PC-9 (cell line): ENCODE measurements at regions of chr20 and their contacts with region 1.

Region 1: DNA sequence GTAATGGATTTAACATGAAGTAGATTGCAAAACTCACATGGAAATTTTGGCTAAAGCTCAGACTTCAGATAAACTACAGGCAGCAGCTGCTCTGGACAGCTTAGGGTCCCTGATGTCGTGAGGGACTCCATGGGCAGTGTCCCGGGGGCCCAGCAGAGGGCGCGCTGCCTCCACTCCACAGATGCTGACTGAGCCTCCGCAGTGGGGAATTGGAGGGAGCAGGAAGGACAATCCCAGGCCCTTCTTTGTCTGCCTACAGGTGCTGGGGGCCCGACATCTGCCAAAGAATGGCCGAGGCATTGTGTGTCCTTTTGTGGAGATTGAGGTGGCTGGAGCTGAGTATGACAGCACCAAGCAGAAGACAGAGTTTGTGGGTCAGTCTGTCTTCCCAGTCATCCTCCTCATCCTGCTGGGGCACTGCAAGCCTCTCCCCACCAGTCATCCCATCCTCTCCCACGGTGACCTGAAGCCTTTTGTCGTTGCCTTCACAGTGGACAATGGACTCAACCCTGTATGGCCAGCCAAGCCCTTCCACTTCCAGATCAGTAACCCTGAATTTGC is 35.9 kb downstream of the PLCG1 start:
- DNase-seq: peak; percentile 45 to 74
- H3K4me3 ChIP-seq: no peak overlapping the region
- H3K27ac ChIP-seq: no peak overlapping the region
- H3K4me1 ChIP-seq: peaks cover 11% of the 10 kb centered on the region
- H3K27me3 ChIP-seq: no peaks in the 10 kb centered on the region
- CTCF ChIP-seq: peak; percentile 98

Region 2: GRCh38 chr20:41136680-41137613 is 36.3 kb before region 1 on chr20 and contains the start of gene PLCG1:
- CTCF ChIA-PET with region 1: interaction called, 11 read pairs
- POLR2A ChIA-PET with region 1: no interaction called
- intact Hi-C with region 1: no loop called
- DNase-seq: peak; percentile 62 to 92
- H3K4me3 ChIP-seq: peak within 1 kb of the TSS; percentile 94
- H3K27ac ChIP-seq: no peak within 1 kb of the TSS
- H3K4me1 ChIP-seq: peaks cover 15% of the 10 kb centered on the region
- H3K27me3 ChIP-seq: no peaks in the 10 kb centered on the region
- CTCF ChIP-seq: no peak
- total RNA-seq, gene PLCG1: 64.1 and 69.4 TPM in 2 replicates

Region 3: GRCh38 chr20:41232973-41233926 is 60.0 kb after region 1 on chr20:
- CTCF ChIA-PET with region 1: interaction called, 6 read pairs
- POLR2A ChIA-PET with region 1: no interaction called
- intact Hi-C with region 1: loop called (anchors 1 kb)
- DNase-seq: peak in 1 of 2 experiments; percentile 45
- H3K4me3 ChIP-seq: peak overlapping the region; percentile 45; the same call in 1 of the 2 replicates
- H3K27ac ChIP-seq: no peak overlapping the region
- H3K4me1 ChIP-seq: peaks cover 11% of the 10 kb centered on the region
- H3K27me3 ChIP-seq: no peaks in the 10 kb centered on the region
- CTCF ChIP-seq: no peak

Region 4: GRCh38 chr20:41317536-41318270 is 144.5 kb after region 1 on chr20 and contains the start of gene ZHX3:
- CTCF ChIA-PET with region 1: no interaction called
- POLR2A ChIA-PET with region 1: no interaction called
- intact Hi-C with region 1: loop called (anchors 1 kb)
- DNase-seq: peak; percentile 87 to 99
- H3K4me3 ChIP-seq: peak within 1 kb of the TSS; percentile 83
- H3K27ac ChIP-seq: peak within 1 kb of the TSS; percentile 51
- H3K4me1 ChIP-seq: peaks cover 32% of the 10 kb centered on the region
- H3K27me3 ChIP-seq: no peaks in the 10 kb centered on the region
- CTCF ChIP-seq: no peak
- total RNA-seq, gene ZHX3: 21.5 and 23.3 TPM in 2 replicates

Region 5: DNA sequence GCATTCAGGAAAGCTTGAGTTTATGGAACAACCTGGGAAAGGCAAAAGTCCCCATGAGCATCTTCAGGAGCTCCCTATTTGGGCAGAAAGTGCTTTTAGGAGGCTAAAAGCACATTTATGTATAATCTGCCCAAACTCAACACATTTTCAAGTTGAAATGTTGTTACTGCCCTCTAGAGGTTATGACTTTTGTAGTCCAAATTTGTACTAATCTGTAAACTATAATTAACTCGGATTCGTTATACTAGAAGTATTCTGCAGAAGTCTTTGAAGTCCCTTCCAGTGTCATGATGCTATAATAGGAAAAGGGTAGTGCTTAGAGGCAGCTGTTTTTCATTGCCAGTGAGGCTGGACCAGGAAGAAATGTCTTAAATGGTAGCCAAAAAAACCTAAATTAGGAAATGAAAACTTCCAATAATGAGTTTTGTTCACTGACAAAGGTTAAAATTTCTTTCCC is 238.2 kb after region 1 on chr20:
- CTCF ChIA-PET with region 1: no interaction called
- POLR2A ChIA-PET with region 1: no interaction called
- intact Hi-C with region 1: loop called (anchors 10 kb)
- DNase-seq: no peak
- H3K4me3 ChIP-seq: no peak overlapping the region
- H3K27ac ChIP-seq: no peak overlapping the region
- H3K4me1 ChIP-seq: no peaks in the 10 kb centered on the region
- H3K27me3 ChIP-seq: no peaks in the 10 kb centered on the region
- CTCF ChIP-seq: peak; percentile 70